ENCODE measurements at regions of chr11 and their contacts with region 1.

Region 1: GRCh38 chr11:95849087-95849825 is 59.0 kb downstream of the CEP57 start:
- DNase-seq: peak; percentile 8 to 64
- ATAC-seq: peak; percentile 80 to 88; a peak in 4 of 6 replicates
- H3K4me3 ChIP-seq: no peak overlapping the region
- H3K27ac ChIP-seq: no peak overlapping the region
- H3K4me1 ChIP-seq: peaks cover 7% of the 10 kb centered on the region; the same call in 2 of the 3 replicates
- CTCF ChIP-seq: peak; percentile 35; the same call in 2 of the 3 replicates
- EP300 ChIP-seq: no peak
- POLR2A ChIP-seq: no peak
- RAD21 ChIP-seq: peak; percentile 40 to 52; a peak in 2 of 5 replicates

Region 2: GRCh38 chr11:95764267-95764898 is 84.9 kb before region 1 on chr11:
- CTCF ChIA-PET with region 1: no interaction called
- POLR2A ChIA-PET with region 1: no interaction called
- DNase-seq: peak; percentile 13 to 45
- ATAC-seq: peak; percentile 59 to 76; a peak in 4 of 6 replicates
- H3K4me3 ChIP-seq: no peak overlapping the region
- H3K27ac ChIP-seq: no peak overlapping the region
- H3K4me1 ChIP-seq: peaks cover 6% of the 10 kb centered on the region; the same call in 1 of the 3 replicates
- CTCF ChIP-seq: peak; percentile 64
- EP300 ChIP-seq: no peak
- POLR2A ChIP-seq: no peak
- RAD21 ChIP-seq: peak; percentile 68 to 77

Region 3: DNA sequence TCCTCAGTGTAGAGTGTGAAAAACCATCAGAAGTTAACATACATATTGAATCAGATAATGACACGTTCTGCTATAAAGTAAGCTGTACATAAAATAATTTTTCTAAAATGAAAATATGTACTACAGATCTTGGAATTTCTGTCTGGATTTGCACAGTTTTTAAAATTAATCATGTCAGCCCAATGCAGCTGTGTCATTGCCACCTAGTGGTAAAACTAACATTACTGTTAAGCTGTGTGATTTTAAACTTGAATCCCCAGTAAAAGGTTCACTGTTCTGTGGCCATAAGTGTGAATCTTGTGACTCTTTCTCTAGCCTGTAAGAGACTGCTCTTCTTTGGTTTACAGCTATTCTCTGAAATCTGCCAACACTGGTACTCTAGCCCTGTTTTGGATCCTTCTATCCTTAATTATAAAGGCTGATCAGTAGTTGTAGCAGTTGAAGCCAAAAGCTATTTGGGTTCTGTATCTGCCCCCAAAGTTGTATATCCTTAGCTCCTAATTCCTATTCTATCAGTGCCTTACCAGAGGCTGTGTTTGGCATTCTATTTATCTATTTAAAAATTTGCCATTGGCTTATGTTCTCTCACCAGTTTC is 544.6 kb after region 1 on chr11:
- CTCF ChIA-PET with region 1: interaction called, 10 read pairs
- POLR2A ChIA-PET with region 1: interaction called, 3 read pairs
- DNase-seq: peak; percentile 20 to 43
- ATAC-seq: no peak
- H3K4me3 ChIP-seq: no peak overlapping the region
- H3K27ac ChIP-seq: no peak overlapping the region
- H3K4me1 ChIP-seq: no peaks in the 10 kb centered on the region
- CTCF ChIP-seq: peak; percentile 77
- EP300 ChIP-seq: no peak
- POLR2A ChIP-seq: no peak
- RAD21 ChIP-seq: peak; percentile 74 to 77